Transverse colon (tissue), 4 donors: ENCODE measurements at regions of chr19 and their contacts with region 1.

Region 1: GRCh38 chr19:19138169-19138981 is at the start of gene TMEM161A:
- DNase-seq: peak; percentile 98
- H3K4me3 ChIP-seq: peak within 1 kb of the TSS; percentile 47 to 96 (median 65)
- H3K27ac ChIP-seq: peak within 1 kb of the TSS; percentile 54 to 84 (median 76)
- H3K4me1 ChIP-seq: peaks cover 0 to 12% (median 9%) of the 10 kb centered on the region in 4 donors
- H3K27me3 ChIP-seq: no peaks in the 10 kb centered on the region
- CTCF ChIP-seq: no peak
- EP300 ChIP-seq: no peak
- POLR2A ChIP-seq: peak; percentile 60
- total RNA-seq, gene TMEM161A: 16.9 to 41.9 (median 18.5) TPM

Region 2: GRCh38 chr19:18955042-18955441 is 183.3 kb before region 1 on chr19:
- in situ Hi-C with region 1: no loop called
- intact Hi-C with region 1: loop called (anchors 5 kb)
- DNase-seq: no peak
- H3K4me3 ChIP-seq: no peak overlapping the region
- H3K27ac ChIP-seq: no peak overlapping the region
- H3K4me1 ChIP-seq: no peaks in the 10 kb centered on the region
- H3K27me3 ChIP-seq: no peaks in the 10 kb centered on the region
- CTCF ChIP-seq: no peak
- EP300 ChIP-seq: no peak
- POLR2A ChIP-seq: no peak

Region 3: GRCh38 chr19:19053508-19054314 is 84.7 kb before region 1 on chr19:
- in situ Hi-C with region 1: loop called in 1 of 4 experiments (anchors 10 kb)
- intact Hi-C with region 1: loop called (anchors 10 kb)
- DNase-seq: peak; percentile 77
- H3K4me3 ChIP-seq: no peak overlapping the region
- H3K27ac ChIP-seq: no peak overlapping the region
- H3K4me1 ChIP-seq: no peaks in the 10 kb centered on the region
- H3K27me3 ChIP-seq: no peaks in the 10 kb centered on the region
- CTCF ChIP-seq: peak; percentile 68 to 82 (median 78)
- EP300 ChIP-seq: no peak
- POLR2A ChIP-seq: no peak